CD14-positive monocyte (primary cell): ENCODE measurements at regions of chr21 and their contacts with region 1.

Region 1: GRCh38 chr21:36429947-36430546 is 44.9 kb downstream of the CHAF1B start:
- DNase-seq: peak; percentile 91 to 97 (median 96)
- H3K4me3 ChIP-seq: peak overlapping the region; percentile 18 to 56 (median 24)
- H3K4me3 Mint-ChIP-seq: peak overlapping the region; percentile 83 to 93
- H3K27ac ChIP-seq: peak overlapping the region in 1 of 2 donors; percentile 61
- H3K27ac Mint-ChIP-seq: peak overlapping the region; percentile 54 to 97 (median 85)
- H3K4me1 ChIP-seq: peaks cover 21 to 22% of the 10 kb centered on the region in 2 donors
- H3K4me1 Mint-ChIP-seq: peaks cover 32% of the 10 kb centered on the region
- H3K27me3 ChIP-seq: peaks cover 0 to 14% of the 10 kb centered on the region in 2 donors
- H3K27me3 Mint-ChIP-seq: peaks cover 22 to 38% (median 31%) of the 10 kb centered on the region in 3 donors
- CTCF ChIP-seq: no peak

Region 2: GRCh38 chr21:36471254-36471723 is 41.2 kb after region 1 on chr21:
- intact Hi-C with region 1: no loop called
- DNase-seq: no peak
- H3K4me3 ChIP-seq: no peak overlapping the region
- H3K4me3 Mint-ChIP-seq: peak overlapping the region in 1 of 2 donors; percentile 43
- H3K27ac ChIP-seq: no peak overlapping the region
- H3K27ac Mint-ChIP-seq: no peak overlapping the region
- H3K4me1 ChIP-seq: no peaks in the 10 kb centered on the region
- H3K4me1 Mint-ChIP-seq: no peaks in the 10 kb centered on the region
- H3K27me3 ChIP-seq: no peaks in the 10 kb centered on the region
- H3K27me3 Mint-ChIP-seq: peaks cover 2 to 10% (median 8%) of the 10 kb centered on the region in 3 donors
- CTCF ChIP-seq: no peak

Region 3: DNA sequence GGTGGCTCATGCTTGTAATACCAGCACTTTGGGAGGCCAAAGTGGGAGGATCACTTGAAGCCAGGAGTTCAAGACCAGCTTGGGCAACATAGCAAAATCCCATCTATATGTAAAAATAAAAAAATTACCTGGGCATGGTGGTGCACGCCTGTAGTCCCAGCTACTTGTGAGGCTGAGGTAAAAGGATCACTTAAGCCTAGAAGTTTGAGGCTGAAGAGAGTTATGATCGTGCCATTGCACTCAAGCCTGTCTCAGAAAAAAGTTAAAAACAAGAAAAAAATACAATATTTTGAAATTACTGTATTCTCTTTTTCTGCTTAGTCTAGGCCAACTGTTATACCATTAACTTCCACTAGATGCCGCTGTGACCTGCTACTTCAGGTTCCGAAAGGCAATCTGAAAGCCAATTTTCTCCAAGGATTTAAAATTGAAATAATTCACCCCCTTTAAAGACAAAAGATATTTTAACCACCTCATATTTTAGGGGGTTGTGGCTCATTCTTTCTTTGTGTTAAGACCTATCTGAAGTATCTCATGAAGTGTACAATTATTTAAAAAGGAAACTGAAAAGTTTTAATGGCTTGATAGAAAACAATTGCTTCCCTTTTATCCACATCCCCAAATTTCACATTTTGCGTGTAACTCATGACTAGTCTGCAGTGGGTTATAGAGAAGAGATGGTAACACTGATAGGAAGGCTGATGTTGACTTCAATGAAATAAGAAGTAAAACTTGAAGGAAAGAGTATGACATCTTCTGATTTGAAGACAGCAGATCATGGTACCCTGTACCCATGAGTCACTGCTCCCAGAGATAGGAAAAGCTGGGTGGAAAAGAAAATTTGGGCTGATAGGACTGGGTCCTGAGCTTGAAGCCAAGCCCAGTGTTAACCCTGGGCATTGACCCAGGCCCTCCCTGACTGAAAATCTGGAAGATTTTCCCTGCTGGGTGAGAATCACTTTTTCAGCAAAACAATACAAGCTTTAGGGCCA is 74.3 kb after region 1 on chr21:
- intact Hi-C with region 1: loop called in 1 of 2 experiments (anchors 10 kb)
- DNase-seq: peak; percentile 16 to 42 (median 37)
- H3K4me3 ChIP-seq: no peak overlapping the region
- H3K4me3 Mint-ChIP-seq: no peak overlapping the region
- H3K27ac ChIP-seq: no peak overlapping the region
- H3K27ac Mint-ChIP-seq: no peak overlapping the region
- H3K4me1 ChIP-seq: no peaks in the 10 kb centered on the region
- H3K4me1 Mint-ChIP-seq: no peaks in the 10 kb centered on the region
- H3K27me3 ChIP-seq: no peaks in the 10 kb centered on the region
- H3K27me3 Mint-ChIP-seq: peaks cover 0 to 6% (median 2%) of the 10 kb centered on the region in 3 donors
- CTCF ChIP-seq: peak; percentile 99

Region 4: DNA sequence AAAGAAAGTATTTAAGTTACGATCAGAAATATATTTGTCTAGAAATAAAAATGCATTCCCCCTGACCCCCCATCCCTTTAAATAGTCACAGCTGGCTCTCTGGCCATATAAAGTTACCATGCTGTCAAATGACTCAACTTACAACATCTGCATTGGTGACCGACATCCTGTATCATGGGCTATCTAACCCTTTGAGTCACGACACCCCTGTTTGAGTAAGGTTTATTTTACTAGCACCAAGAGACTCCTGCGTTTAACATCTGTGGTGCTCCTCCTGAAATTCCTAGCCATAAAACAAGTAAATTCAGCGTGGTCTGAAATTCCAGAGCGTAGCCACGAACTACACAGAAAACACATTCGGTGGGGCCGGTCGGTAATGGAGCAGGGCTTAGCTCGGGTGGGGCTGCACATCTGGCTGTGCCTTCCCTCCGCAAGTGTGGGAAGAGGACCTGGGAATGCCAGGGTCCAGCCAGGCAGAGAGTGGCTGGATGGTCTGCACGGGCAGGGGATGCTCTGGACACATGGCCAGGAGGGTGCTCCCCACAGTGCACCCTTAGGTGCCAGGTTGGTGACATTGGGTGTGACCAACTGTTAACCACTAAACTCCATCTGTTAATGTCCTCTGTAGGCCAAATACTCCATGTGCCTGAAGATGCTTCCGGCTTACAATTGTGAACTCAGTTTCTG is 102.9 kb after region 1 on chr21:
- intact Hi-C with region 1: no loop called
- DNase-seq: no peak
- H3K4me3 ChIP-seq: no peak overlapping the region
- H3K4me3 Mint-ChIP-seq: no peak overlapping the region
- H3K27ac ChIP-seq: no peak overlapping the region
- H3K27ac Mint-ChIP-seq: no peak overlapping the region
- H3K4me1 ChIP-seq: no peaks in the 10 kb centered on the region
- H3K4me1 Mint-ChIP-seq: peaks cover 2% of the 10 kb centered on the region
- H3K27me3 ChIP-seq: no peaks in the 10 kb centered on the region
- H3K27me3 Mint-ChIP-seq: peaks cover 1 to 5% (median 2%) of the 10 kb centered on the region in 3 donors
- CTCF ChIP-seq: no peak